H1 (cell line): ENCODE measurements at regions of chr1 and their contacts with region 1.

Region 1: DNA sequence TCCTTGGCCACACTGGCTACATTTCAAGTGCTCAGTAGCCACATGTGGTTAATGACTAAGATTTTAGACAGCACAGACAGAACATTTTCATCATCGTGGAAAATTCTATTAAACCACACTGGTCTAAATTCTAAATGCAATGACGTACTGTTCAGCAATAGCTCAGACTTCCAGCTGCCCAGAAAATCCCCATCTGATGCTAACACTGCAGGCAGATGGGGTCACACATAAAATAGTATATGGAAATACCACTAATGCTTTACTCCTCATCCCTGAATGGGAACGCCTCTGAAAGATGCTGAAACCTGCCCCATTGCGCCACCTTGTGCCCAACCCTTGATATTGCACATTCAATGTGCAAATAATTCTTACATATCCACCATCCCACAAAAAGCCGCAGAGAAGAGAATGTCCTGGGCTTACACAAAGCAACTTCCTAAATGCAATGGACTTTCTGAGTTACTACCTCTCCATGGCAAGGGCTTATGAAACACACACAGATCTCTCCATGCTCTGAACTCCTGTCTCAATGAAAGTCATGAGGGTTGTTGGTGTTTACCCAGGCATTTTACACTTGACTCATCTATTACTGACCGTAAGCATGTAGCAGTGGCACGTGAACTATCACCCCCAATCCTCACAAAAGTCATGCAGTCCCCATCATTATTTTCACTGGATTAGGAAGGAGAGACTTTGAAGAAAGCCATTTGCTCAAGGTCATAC is 20.3 kb upstream of the SLC5A9 start:
- DNase-seq: peak in 1 of 2 experiments; percentile 84
- H3K4me3 ChIP-seq: no peak overlapping the region
- H3K27ac ChIP-seq: no peak overlapping the region
- H3K4me1 ChIP-seq: peaks cover 0 to 2% (median 0%) of the 10 kb centered on the region in 4 experiments; a peak in 1 of 7 replicates
- H3K27me3 ChIP-seq: no peaks in the 10 kb centered on the region; a peak in 1 of 7 replicates
- CTCF ChIP-seq: peak; percentile 53 to 84 (median 82)
- EP300 ChIP-seq: no peak
- POLR2A ChIP-seq: no peak
- RAD21 ChIP-seq: peak; percentile 85 to 89

Region 2: DNA sequence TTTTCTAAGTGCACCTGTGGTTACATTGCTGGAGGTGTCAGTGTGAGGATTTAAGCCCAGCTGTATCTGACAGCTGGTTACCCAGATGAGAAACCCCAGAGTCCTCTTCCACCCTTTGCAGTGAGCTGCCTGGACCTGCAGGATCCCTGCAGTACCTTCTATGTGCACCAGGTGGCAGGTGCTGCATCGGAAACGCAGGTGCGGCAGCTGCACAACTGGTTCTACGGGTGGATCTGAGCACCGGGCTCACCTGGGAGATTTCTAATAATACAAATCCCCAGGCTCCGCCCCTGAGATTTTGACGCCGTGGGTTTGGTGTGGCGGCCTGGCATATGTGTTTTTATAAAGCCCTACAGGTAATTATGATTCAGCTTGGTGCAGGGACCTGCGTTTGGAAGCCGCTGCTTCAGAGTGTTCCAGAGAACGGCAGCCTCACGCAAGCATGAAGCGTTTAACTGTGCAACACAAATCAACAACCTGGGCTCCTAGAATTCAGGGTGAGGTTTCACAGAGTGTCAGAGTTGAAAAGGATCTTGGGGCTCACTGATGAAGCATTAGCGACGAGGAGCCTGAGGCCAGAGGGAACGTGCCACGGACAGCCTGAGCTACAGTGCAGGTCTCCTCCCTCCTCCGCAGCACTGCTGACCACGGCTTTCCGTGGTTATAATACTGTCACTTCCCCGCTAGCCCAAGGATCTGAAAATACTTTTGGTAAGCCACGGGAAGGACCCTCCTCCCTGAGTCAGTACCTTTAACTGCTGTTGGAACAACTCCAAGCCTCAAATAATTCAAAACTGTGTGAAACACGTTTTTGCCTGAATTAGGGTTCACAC is 108.3 kb before region 1 on chr1:
- CTCF ChIA-PET with region 1: interaction called, 23 read pairs
- POLR2A ChIA-PET with region 1: no interaction called
- DNase-seq: peak; percentile 43 to 95
- H3K4me3 ChIP-seq: peak overlapping the region in 1 of 4 experiments; percentile 42; a peak in 1 of 8 replicates
- H3K27ac ChIP-seq: no peak overlapping the region
- H3K4me1 ChIP-seq: no peaks in the 10 kb centered on the region
- H3K27me3 ChIP-seq: peaks cover 0 to 4% (median 1%) of the 10 kb centered on the region in 4 experiments; a peak in 1 of 7 replicates
- CTCF ChIP-seq: peak; percentile 93 to 97 (median 97)
- EP300 ChIP-seq: no peak
- POLR2A ChIP-seq: no peak
- RAD21 ChIP-seq: peak; percentile 83 to 89

Region 3: GRCh38 chr1:48114596-48115382 is 87.4 kb before region 1 on chr1:
- CTCF ChIA-PET with region 1: interaction called, 121 read pairs
- POLR2A ChIA-PET with region 1: no interaction called
- DNase-seq: no peak
- H3K4me3 ChIP-seq: no peak overlapping the region
- H3K27ac ChIP-seq: no peak overlapping the region
- H3K4me1 ChIP-seq: peaks cover 0 to 4% (median under 1%) of the 10 kb centered on the region in 4 experiments; a peak in 1 of 7 replicates
- H3K27me3 ChIP-seq: no peaks in the 10 kb centered on the region
- CTCF ChIP-seq: no peak
- EP300 ChIP-seq: no peak
- POLR2A ChIP-seq: no peak
- RAD21 ChIP-seq: no peak

Region 4: DNA sequence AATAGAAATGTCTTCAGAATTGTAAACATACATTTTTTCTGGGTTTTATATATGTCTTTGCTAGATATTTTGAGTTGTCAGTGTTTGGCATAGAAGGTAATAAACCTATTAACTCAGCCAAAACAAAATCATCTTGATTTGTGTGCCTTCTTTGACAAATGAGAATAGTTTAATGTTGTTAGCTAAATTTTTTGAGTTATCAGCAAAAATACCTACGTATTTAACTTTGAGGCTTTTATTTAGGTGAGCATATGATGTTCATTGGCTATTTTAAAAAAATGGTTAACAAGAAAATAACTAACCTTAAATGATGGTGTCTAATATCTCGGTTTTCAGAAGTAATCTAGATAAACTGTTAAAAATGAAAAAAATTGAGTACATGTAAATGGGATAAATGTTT is 62.9 kb before region 1 on chr1:
- CTCF ChIA-PET with region 1: no interaction called
- POLR2A ChIA-PET with region 1: no interaction called
- DNase-seq: no peak
- H3K4me3 ChIP-seq: no peak overlapping the region
- H3K27ac ChIP-seq: no peak overlapping the region
- H3K4me1 ChIP-seq: no peaks in the 10 kb centered on the region
- H3K27me3 ChIP-seq: no peaks in the 10 kb centered on the region
- CTCF ChIP-seq: no peak
- EP300 ChIP-seq: no peak
- POLR2A ChIP-seq: no peak
- RAD21 ChIP-seq: no peak

Region 5: DNA sequence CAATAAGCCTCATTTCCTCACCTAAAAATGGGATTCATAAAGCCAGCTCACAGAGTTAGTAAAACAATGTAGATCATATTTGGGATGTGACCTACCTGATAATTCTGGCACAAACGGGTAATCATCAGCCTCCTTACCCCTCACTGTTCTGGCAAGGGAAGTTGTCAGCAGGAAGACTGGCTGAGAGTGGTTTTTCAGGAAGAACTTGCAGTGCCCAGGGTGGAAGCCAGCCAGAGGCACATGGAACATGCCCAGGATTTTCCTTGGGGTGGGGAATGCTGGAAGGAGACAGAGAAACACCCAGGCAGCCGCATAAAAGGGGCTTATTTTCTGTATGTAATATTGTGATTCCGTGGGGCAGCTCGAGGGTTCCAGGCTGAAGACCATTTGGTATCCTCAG is 12.6 kb after region 1 on chr1:
- CTCF ChIA-PET with region 1: interaction called, 24 read pairs
- POLR2A ChIA-PET with region 1: interaction called, 3 read pairs
- DNase-seq: no peak
- H3K4me3 ChIP-seq: no peak overlapping the region
- H3K27ac ChIP-seq: no peak overlapping the region; the same call in 1 of the 2 replicates
- H3K4me1 ChIP-seq: peaks cover 1 to 9% (median 5%) of the 10 kb centered on the region in 4 experiments; a peak in 3 of 7 replicates
- H3K27me3 ChIP-seq: no peaks in the 10 kb centered on the region
- CTCF ChIP-seq: no peak
- EP300 ChIP-seq: no peak
- POLR2A ChIP-seq: no peak
- RAD21 ChIP-seq: no peak

Region 6: GRCh38 chr1:48236716-48237470 is 34.7 kb after region 1 on chr1:
- CTCF ChIA-PET with region 1: interaction called, 68 read pairs
- POLR2A ChIA-PET with region 1: no interaction called
- DNase-seq: peak in 1 of 2 experiments; percentile 52
- H3K4me3 ChIP-seq: no peak overlapping the region
- H3K27ac ChIP-seq: no peak overlapping the region
- H3K4me1 ChIP-seq: no peaks in the 10 kb centered on the region
- H3K27me3 ChIP-seq: no peaks in the 10 kb centered on the region
- CTCF ChIP-seq: peak in 2 of 3 experiments; percentile 66 to 82; a peak in 3 of 4 replicates
- EP300 ChIP-seq: no peak
- POLR2A ChIP-seq: no peak
- RAD21 ChIP-seq: peak; percentile 89 to 92

Region 7: DNA sequence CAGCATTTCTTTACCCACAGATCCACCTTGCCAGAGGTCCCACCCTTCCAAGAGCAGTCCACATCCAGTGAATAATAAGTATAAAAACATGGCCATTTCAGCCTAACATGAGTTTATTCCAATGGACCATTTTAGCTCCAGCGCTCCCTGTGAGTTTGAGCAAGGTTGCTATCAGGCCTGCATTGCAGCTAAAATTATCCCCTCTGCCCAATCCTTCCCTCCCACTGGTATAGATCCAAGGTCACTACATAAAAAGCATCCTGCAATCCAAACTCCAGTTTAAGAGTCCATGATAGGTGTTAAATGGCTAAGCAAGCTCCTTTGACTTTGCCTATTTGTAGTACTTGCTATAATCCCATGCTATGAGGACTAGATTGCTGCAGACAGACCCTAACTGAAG is 55.9 kb after region 1 on chr1:
- CTCF ChIA-PET with region 1: no interaction called
- POLR2A ChIA-PET with region 1: no interaction called
- DNase-seq: no peak
- H3K4me3 ChIP-seq: no peak overlapping the region
- H3K27ac ChIP-seq: no peak overlapping the region
- H3K4me1 ChIP-seq: no peaks in the 10 kb centered on the region
- H3K27me3 ChIP-seq: no peaks in the 10 kb centered on the region
- CTCF ChIP-seq: no peak
- EP300 ChIP-seq: no peak
- POLR2A ChIP-seq: no peak
- RAD21 ChIP-seq: no peak